OCI-LY7 (cell line): ENCODE measurements at regions of chr9 and their contacts with region 1.

Region 1: DNA sequence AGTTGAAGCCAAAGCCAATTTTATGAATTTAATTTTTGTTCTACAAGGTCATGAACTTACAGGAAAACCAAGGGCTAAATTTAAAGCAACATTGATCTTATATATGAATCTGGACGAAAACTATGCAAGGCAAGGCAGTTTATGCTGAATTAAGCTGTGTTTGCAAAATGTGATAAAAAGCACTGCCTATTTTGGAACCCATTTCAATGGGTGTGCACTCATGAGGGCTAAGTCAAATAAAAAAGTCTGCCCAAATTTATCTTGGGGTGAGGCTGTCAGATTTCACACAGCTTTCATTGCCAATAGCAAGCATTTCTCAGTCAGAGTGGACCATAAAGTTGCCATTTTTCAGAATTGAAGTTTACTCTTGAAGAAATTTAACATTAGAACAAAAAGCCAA is 199.9 kb downstream of the LURAP1L start:
- DNase-seq: no peak
- H3K4me3 ChIP-seq: no peak overlapping the region
- H3K27ac ChIP-seq: no peak overlapping the region
- H3K4me1 ChIP-seq: no peaks in the 10 kb centered on the region
- CTCF ChIP-seq: no peak

Region 2: DNA sequence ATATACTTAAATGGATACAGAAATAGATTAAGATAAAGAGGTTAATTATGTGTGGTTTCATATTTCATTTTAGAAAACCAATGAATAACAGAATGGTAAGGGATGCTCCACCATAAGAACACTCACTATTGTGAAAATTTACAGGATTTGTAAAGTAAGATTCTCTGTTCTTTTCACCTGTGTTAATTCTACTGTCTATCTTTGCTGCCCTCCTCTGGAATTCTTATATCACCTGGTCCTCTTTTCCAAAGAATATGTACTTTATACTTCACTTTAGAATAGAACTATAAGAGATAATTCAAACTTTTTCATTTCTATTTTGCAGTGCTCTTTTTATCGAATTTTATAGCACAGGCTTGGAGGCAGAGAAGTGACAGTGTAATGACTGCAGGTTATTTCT is 13.6 kb after region 1 on chr9:
- CTCF ChIA-PET with region 1: no interaction called
- POLR2A ChIA-PET with region 1: interaction called, 11 read pairs
- intact Hi-C with region 1: no loop called
- DNase-seq: no peak
- H3K4me3 ChIP-seq: no peak overlapping the region
- H3K27ac ChIP-seq: no peak overlapping the region
- H3K4me1 ChIP-seq: no peaks in the 10 kb centered on the region
- CTCF ChIP-seq: no peak

Region 3: GRCh38 chr9:13557746-13558145 is 583.1 kb after region 1 on chr9:
- CTCF ChIA-PET with region 1: no interaction called
- POLR2A ChIA-PET with region 1: no interaction called
- intact Hi-C with region 1: no loop called
- DNase-seq: no peak
- H3K4me3 ChIP-seq: no peak overlapping the region
- H3K27ac ChIP-seq: no peak overlapping the region
- H3K4me1 ChIP-seq: no peaks in the 10 kb centered on the region
- CTCF ChIP-seq: no peak